Dorsolateral prefrontal cortex (tissue), 120 donors: ENCODE measurements at regions of chr5 and their contacts with region 1.

Region 1: GRCh38 chr5:79865579-79865978 is 125.5 kb downstream of the MTX3 start:
- DNase-seq: no peak
- H3K4me3 ChIP-seq: no peak overlapping the region
- H3K27ac ChIP-seq: no peak overlapping the region
- H3K27me3 ChIP-seq: no peaks in the 10 kb centered on the region
- CTCF ChIP-seq: no peak

Region 2: DNA sequence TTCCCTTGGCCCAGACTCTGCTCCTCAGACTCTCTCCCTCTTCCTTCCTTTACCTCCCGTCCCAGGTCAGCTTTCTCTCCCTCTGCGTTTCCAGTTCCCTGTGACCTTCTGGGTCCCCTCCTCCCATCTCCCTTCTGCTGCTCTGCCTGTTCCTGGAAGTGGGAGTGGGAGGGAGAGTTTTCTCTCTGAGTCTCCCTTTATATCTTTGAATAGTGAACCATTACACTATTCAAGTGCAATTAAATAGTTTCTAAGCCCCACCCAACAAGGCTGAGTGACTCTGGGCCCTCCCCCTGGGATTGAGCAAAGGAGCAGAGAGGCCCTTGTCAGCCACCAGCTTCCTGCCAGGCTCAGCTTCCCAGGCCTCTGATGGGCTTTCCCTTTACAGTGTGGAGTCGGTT is 204.3 kb after region 1 on chr5:
- intact Hi-C with region 1: loop called in 1 of 2 experiments (anchors 5 kb)
- DNase-seq: no peak
- H3K4me3 ChIP-seq: peak overlapping the region in 6 of 59 donors; percentile 12 to 40 (median 30)
- H3K27ac ChIP-seq: peak overlapping the region in 29 of 59 donors; percentile 1 to 67 (median 50)
- H3K27me3 ChIP-seq: no peaks in the 10 kb centered on the region
- CTCF ChIP-seq: no peak